Transverse colon (tissue), 4 donors: ENCODE measurements at regions of chr10 and their contacts with region 1.

Region 1: DNA sequence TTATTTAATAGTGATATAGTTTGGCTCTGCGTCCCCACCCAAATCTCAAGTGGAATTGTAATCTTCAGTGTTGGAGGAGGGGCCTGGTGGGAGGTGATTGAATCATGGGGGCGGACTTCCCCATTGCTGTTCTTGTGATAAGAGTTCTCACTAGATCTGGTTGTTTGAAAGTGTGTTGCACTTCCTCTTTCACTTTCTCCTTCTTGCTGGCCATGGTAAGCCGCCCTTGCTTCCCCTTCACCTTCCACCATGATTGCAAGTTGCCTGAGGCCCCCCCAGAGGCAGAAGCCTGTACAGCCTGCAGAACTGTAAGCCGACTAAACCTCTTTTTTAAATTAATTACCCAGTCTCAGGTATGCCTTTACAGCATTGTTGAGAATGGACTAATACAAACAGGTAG is 101.4 kb downstream of the MTPAP start:
- DNase-seq: no peak
- H3K4me3 ChIP-seq: no peak overlapping the region
- H3K27ac ChIP-seq: no peak overlapping the region
- H3K4me1 ChIP-seq: no peaks in the 10 kb centered on the region
- H3K27me3 ChIP-seq: no peaks in the 10 kb centered on the region
- CTCF ChIP-seq: no peak
- EP300 ChIP-seq: no peak
- POLR2A ChIP-seq: no peak

Region 2: GRCh38 chr10:29998142-29998808 is 249.4 kb before region 1 on chr10:
- in situ Hi-C with region 1: loop called in 3 of 4 experiments (anchors 10 to 25 kb)
- intact Hi-C with region 1: no loop called
- DNase-seq: peak; percentile 76
- H3K4me3 ChIP-seq: no peak overlapping the region
- H3K27ac ChIP-seq: no peak overlapping the region
- H3K4me1 ChIP-seq: peaks cover 5 to 24% (median 13%) of the 10 kb centered on the region in 4 donors
- H3K27me3 ChIP-seq: no peaks in the 10 kb centered on the region
- CTCF ChIP-seq: peak; percentile 87 to 98 (median 96)
- EP300 ChIP-seq: no peak
- POLR2A ChIP-seq: no peak